Mammary epithelial cell (primary cell): ENCODE measurements at regions of chr20 and their contacts with region 1.

Region 1: DNA sequence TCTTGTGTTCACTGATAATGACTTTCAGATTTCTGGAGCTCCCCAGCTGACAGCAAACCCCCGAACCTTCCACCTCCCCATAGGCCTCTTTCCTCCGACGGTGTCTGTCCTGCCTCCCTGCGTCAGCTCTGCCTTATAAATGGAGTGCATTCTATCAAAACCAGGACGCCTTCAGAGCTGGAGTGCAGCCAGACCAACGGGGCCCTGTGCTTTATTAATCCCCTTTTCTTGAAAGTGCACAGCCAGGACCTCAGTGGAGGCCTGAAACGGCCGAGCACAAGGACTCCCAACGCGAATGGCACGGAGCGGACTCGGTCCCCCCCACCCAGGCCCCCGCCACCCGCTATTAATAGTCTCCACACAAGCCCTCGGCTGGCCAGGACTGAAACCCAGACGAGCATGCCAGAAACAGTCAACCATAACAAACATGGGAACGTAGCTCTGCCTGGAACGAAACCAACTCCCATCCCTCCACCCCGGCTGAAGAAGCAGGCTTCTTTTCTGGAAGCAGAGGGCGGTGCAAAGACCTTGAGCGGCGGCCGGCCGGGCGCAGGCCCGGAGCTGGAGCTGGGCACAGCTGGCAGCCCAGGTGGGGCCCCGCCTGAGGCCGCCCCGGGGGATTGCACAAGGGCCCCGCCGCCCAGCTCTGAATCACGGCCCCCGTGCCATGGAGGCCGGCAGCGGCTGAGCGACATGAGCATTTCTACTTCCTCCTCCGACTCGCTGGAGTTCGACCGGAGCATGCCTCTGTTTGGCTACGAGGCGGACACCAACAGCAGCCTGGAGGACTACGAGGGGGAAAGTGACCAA is 42.3 kb upstream of the NAA20 start:
- DNase-seq: peak; percentile 91
- H3K4me3 ChIP-seq: peak overlapping the region; percentile 68 to 92 (median 86)
- H3K27ac ChIP-seq: peak overlapping the region; percentile 94
- H3K4me1 ChIP-seq: peaks cover 34% of the 10 kb centered on the region
- H3K27me3 ChIP-seq: no peaks in the 10 kb centered on the region
- CTCF ChIP-seq: no peak

Region 2: DNA sequence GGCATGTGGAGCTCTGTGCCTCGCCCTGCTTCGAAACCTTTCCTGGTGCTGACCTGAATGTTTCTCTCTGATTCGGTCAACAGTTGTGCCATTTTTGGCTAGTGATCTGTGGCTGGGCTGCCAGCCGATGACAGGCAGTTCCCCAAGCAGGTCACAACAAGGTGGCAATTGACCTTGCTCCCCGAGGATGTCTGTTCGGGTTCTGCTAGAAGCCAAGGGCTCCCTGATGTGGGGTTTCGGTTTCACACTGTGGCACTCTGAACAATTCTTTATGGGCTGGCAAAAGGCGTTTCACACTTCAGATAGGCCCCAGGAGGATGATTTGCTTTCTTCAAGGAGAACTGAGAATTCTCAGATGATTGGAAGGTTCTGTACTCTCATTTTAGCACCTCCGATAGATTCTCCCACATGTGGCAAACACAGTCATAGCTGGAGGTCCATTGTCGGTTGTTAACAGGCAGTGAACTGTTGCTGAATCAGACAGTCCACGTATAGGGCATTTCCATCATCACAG is 626.8 kb before region 1 on chr20:
- CTCF ChIA-PET with region 1: no interaction called
- dilution Hi-C with region 1: no loop called
- in situ Hi-C with region 1: no loop called
- intact Hi-C with region 1: no loop called
- DNase-seq: no peak
- H3K4me3 ChIP-seq: no peak overlapping the region
- H3K27ac ChIP-seq: no peak overlapping the region
- H3K4me1 ChIP-seq: no peaks in the 10 kb centered on the region
- H3K27me3 ChIP-seq: no peaks in the 10 kb centered on the region
- CTCF ChIP-seq: no peak

Region 3: DNA sequence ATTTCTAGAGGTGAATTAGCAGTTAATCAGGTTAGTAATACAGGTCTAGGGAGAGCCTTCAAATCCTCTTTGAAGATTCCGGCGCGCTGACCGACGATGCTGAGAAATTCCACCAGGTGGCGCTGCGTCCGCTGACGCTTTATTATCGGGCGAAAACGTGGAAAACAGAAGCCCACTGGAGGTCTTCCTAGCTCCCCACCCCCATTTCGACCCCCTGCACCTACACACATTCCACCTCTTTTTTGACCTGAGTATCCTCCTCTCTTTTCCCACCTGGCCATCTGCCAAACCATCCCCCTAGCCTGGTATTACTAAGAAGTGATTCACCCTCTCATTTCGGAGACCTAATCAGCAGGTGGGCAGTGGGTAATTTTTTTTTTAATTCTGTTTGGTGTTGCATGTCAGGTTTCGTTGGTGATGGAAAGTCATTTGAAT is 282.1 kb before region 1 on chr20:
- CTCF ChIA-PET with region 1: no interaction called
- dilution Hi-C with region 1: no loop called
- in situ Hi-C with region 1: no loop called
- intact Hi-C with region 1: loop called (anchors 1 kb)
- DNase-seq: peak; percentile 65
- H3K4me3 ChIP-seq: peak overlapping the region in 1 of 3 experiments; percentile 26
- H3K27ac ChIP-seq: no peak overlapping the region
- H3K4me1 ChIP-seq: peaks cover 24% of the 10 kb centered on the region
- H3K27me3 ChIP-seq: no peaks in the 10 kb centered on the region
- CTCF ChIP-seq: peak; percentile 92 to 93

Region 4: DNA sequence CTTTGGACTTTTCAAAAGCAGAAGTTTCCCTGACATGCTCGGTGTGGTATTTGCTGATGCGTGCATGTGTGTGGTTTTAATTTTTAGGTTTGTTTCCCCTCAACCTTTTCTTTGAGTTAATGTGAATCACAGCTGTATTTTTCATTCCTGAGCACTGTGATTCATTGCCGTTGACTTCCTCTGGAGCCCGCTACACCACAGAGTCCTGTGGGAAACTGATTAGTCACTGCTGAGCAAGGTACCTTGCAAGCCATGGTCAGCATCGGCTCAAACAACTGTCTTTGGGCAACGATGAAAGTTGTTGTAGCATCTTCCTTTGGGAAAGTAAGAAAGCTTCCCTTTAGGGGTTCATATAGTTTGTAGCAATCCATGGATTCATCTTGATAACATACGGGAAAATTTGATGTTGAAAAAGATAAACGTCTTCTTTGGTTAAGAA is 159.3 kb before region 1 on chr20:
- CTCF ChIA-PET with region 1: no interaction called
- dilution Hi-C with region 1: no loop called
- in situ Hi-C with region 1: no loop called
- intact Hi-C with region 1: loop called (anchors 1 kb)
- DNase-seq: peak; percentile 97
- H3K4me3 ChIP-seq: no peak overlapping the region
- H3K27ac ChIP-seq: peak overlapping the region; percentile 92
- H3K4me1 ChIP-seq: peaks cover 46% of the 10 kb centered on the region
- H3K27me3 ChIP-seq: no peaks in the 10 kb centered on the region
- CTCF ChIP-seq: peak in 1 of 2 donors; percentile 43

Region 5: DNA sequence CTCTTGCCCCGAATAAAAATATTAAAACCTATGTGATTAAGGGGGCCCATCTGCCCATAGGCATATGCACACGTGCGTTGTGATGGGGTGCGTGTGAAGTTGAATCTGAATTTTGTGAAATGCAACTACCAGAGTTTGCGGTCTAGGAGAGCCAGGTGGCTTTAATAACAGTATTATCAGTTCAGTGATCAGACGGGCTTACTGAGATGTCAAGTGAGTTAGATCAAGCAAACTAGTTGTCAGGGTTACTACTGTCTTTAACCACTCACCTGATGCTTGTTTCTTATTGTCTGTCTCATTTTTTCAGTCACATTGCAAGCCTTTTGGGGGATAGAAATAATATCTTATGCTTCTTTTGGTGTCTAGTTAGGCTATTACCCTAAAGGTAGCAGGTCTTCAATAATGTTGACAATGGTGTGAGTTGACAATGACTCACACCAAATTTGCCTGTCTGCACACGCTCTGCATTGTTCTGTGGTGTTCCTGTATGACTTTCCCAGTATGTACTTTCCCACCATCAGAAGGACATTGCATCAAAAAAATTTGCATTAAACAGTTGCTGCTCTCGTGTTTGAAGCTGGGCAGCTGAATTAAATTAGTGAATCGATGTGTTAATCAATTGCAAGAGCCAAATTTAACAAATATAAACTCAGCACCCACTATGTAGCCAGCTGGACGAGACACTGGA is 60.8 kb before region 1 on chr20:
- CTCF ChIA-PET with region 1: no interaction called
- dilution Hi-C with region 1: no loop called
- in situ Hi-C with region 1: no loop called
- intact Hi-C with region 1: loop called (anchors 1 kb)
- DNase-seq: peak; percentile 97
- H3K4me3 ChIP-seq: no peak overlapping the region
- H3K27ac ChIP-seq: peak overlapping the region; percentile 94
- H3K4me1 ChIP-seq: peaks cover 35% of the 10 kb centered on the region
- H3K27me3 ChIP-seq: no peaks in the 10 kb centered on the region
- CTCF ChIP-seq: no peak

Region 6: GRCh38 chr20:19934792-19935491 is 39.9 kb before region 1 on chr20:
- CTCF ChIA-PET with region 1: no interaction called
- dilution Hi-C with region 1: loop called (anchors 5 kb)
- in situ Hi-C with region 1: loop called in 1 of 2 experiments (anchors 5 kb)
- intact Hi-C with region 1: loop called (anchors 2 kb)
- DNase-seq: peak; percentile 88
- H3K4me3 ChIP-seq: peak overlapping the region; percentile 31 to 52 (median 49)
- H3K27ac ChIP-seq: peak overlapping the region; percentile 85
- H3K4me1 ChIP-seq: peaks cover 42% of the 10 kb centered on the region
- H3K27me3 ChIP-seq: no peaks in the 10 kb centered on the region
- CTCF ChIP-seq: no peak

Region 7: GRCh38 chr20:19958219-19958618 is 16.6 kb before region 1 on chr20:
- CTCF ChIA-PET with region 1: no interaction called
- dilution Hi-C with region 1: no loop called
- in situ Hi-C with region 1: no loop called
- intact Hi-C with region 1: loop called (anchors 1 kb)
- DNase-seq: peak; percentile 88
- H3K4me3 ChIP-seq: no peak overlapping the region
- H3K27ac ChIP-seq: peak overlapping the region; percentile 0
- H3K4me1 ChIP-seq: peaks cover 22% of the 10 kb centered on the region
- H3K27me3 ChIP-seq: no peaks in the 10 kb centered on the region
- CTCF ChIP-seq: no peak

Region 8: GRCh38 chr20:20505554-20505953 is 530.7 kb after region 1 on chr20:
- CTCF ChIA-PET with region 1: no interaction called
- dilution Hi-C with region 1: no loop called
- in situ Hi-C with region 1: no loop called
- intact Hi-C with region 1: no loop called
- DNase-seq: no peak
- H3K4me3 ChIP-seq: no peak overlapping the region
- H3K27ac ChIP-seq: no peak overlapping the region
- H3K4me1 ChIP-seq: no peaks in the 10 kb centered on the region
- H3K27me3 ChIP-seq: no peaks in the 10 kb centered on the region
- CTCF ChIP-seq: no peak